ENCODE measurements at regions of chr1 and their contacts with region 1.

Region 1: DNA sequence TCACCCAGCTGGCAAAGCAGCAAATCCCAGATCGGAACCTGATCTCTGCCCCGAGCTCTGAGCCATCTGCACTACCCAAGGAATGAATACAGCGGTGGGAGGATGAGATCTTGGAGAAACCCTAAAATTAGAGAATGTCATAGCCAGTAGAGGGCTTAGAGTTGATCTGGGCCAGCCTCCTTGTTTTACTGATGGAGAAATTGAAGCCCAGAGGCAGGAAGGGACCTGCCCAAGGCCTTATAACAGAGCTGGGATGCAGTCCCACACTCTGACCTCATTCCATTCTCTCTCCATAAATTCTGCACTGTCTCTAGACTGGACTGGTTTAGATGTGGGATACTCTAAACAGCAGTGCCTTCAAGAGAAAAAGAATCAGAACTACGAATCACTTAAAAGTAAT is 4.8 kb upstream of the SFN start:
- H3K4me3 ChIP-seq: no peak overlapping the region
- H3K27ac ChIP-seq: no peak overlapping the region
- H3K4me1 ChIP-seq: 0 out of 2 replicates have a peak, but pooled peaks cover under 1% of the 10 kb centered on the region
- CTCF ChIP-seq: no peak

Region 2: GRCh38 chr1:26363549-26364448 is 494.4 kb before region 1 on chr1:
- CTCF ChIA-PET with region 1: no interaction called
- POLR2A ChIA-PET with region 1: no interaction called
- H3K4me3 ChIP-seq: no peak overlapping the region
- H3K27ac ChIP-seq: no peak overlapping the region
- H3K4me1 ChIP-seq: no peaks in the 10 kb centered on the region
- CTCF ChIP-seq: peak; percentile 79

Region 3: GRCh38 chr1:26874896-26875295 is 16.7 kb after region 1 on chr1:
- CTCF ChIA-PET with region 1: interaction called, 11 read pairs
- POLR2A ChIA-PET with region 1: interaction called, 3 read pairs
- H3K4me3 ChIP-seq: no peak overlapping the region
- H3K27ac ChIP-seq: no peak overlapping the region
- H3K4me1 ChIP-seq: no peaks in the 10 kb centered on the region
- CTCF ChIP-seq: no peak

Region 4: GRCh38 chr1:27010989-27011764 is 153.0 kb after region 1 on chr1:
- CTCF ChIA-PET with region 1: no interaction called
- POLR2A ChIA-PET with region 1: no interaction called
- H3K4me3 ChIP-seq: no peak overlapping the region
- H3K27ac ChIP-seq: no peak overlapping the region
- H3K4me1 ChIP-seq: no peaks in the 10 kb centered on the region
- CTCF ChIP-seq: no peak

Region 5: GRCh38 chr1:27275696-27276095 is 417.5 kb after region 1 on chr1:
- CTCF ChIA-PET with region 1: no interaction called
- POLR2A ChIA-PET with region 1: no interaction called
- H3K4me3 ChIP-seq: no peak overlapping the region
- H3K27ac ChIP-seq: no peak overlapping the region
- H3K4me1 ChIP-seq: no peaks in the 10 kb centered on the region
- CTCF ChIP-seq: no peak